Endothelial cell of umbilical vein (primary cell): ENCODE measurements at regions of chr1 and their contacts with region 1.

Region 1: DNA sequence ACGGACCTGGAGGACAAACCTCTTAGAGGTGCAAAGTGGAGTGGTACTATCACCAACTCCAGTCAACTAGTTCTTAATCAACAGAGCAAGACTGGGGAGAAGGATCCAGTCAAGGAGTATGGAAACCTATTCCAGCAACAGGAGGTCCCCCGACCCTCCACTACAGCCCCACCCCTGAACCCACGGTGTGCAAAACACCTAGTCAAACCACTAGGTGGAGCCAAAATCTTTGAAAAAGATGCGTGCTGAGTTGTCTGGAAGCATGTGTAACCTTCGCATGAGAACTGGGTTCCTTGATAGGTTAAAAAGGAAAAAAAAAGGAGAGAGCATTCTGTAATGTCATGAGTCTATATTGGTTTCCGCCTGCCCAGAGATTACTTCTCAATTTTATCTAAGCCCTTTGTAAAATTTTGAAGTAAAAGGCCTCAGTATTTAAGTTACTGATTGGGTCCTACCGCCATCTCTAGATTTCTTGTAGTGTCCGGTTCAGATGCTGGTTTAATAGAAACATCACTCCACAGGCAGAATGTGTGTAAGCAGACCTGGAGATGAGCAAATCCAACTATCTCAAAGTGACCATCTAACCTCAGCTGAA is 81.9 kb upstream of the HAO2 start:
- DNase-seq: peak; percentile 28
- H3K4me3 ChIP-seq: no peak overlapping the region
- H3K27ac ChIP-seq: no peak overlapping the region
- H3K4me1 ChIP-seq: no peaks in the 10 kb centered on the region
- H3K27me3 ChIP-seq: peaks cover 4 to 11% of the 10 kb centered on the region in 2 experiments
- CTCF ChIP-seq: peak; percentile 49 to 65
- POLR2A ChIP-seq: no peak

Region 2: GRCh38 chr1:119027759-119028158 is 258.9 kb before region 1 on chr1:
- CTCF ChIA-PET with region 1: no interaction called
- POLR2A ChIA-PET with region 1: no interaction called
- dilution Hi-C with region 1: no loop called
- intact Hi-C with region 1: no loop called
- DNase-seq: no peak
- H3K4me3 ChIP-seq: no peak overlapping the region
- H3K27ac ChIP-seq: no peak overlapping the region
- H3K4me1 ChIP-seq: no peaks in the 10 kb centered on the region
- H3K27me3 ChIP-seq: no peaks in the 10 kb centered on the region
- CTCF ChIP-seq: no peak
- POLR2A ChIP-seq: no peak

Region 3: DNA sequence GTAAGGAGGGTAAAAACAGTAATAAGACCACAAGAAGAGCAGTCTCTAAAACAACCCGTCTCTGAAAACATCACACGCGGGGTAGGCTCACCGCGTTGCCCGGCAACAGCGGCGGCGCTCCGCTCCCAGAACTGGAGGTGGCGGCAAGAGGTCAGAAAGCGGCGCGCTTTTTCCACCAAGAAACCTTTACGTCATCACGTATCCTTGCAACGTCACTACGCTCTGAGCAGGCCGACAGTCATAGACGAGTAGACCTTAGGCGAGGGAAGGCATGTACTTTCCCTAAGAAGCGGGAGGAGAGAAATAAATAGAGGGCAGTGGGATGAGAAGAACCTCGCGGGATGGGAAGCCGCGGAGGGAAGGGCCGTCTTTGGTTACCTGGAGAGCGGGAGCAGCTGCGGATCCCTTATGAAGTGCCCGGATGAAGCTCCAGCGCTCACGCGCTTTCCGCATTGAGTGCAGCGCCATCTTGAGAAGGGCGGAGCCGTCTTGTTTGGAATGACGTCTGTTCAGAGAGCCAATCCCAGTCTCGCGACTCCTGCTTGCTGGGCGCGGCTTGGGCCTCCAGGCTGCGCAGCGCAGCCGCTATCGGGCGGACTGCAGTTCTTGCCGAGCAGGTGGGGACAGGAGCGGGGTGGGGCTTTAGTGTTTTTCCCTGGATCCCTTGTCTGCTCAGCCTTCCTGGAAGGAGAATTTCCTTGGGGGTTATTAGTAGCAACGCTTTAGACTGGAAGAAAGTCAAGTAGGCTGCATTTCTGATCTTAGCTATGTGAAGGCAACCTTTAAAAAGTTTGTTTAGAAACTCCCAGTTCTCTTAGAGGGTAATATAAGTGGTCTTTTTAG is 146.3 kb before region 1 on chr1 and contains the start of gene WARS2:
- CTCF ChIA-PET with region 1: no interaction called
- POLR2A ChIA-PET with region 1: no interaction called
- dilution Hi-C with region 1: no loop called
- intact Hi-C with region 1: no loop called
- DNase-seq: peak; percentile 97
- H3K4me3 ChIP-seq: peak within 1 kb of the TSS; percentile 14 to 71 (median 56)
- H3K27ac ChIP-seq: peak within 1 kb of the TSS; percentile 89
- H3K4me1 ChIP-seq: peaks cover 13% of the 10 kb centered on the region
- H3K27me3 ChIP-seq: no peaks in the 10 kb centered on the region
- CTCF ChIP-seq: no peak
- POLR2A ChIP-seq: peak; percentile 92
- total RNA-seq, gene WARS2: 11.8 and 13.1 TPM in 2 replicates

Region 4: GRCh38 chr1:119327436-119328155 is 40.9 kb after region 1 on chr1:
- CTCF ChIA-PET with region 1: interaction called, 4 read pairs
- POLR2A ChIA-PET with region 1: no interaction called
- dilution Hi-C with region 1: no loop called
- intact Hi-C with region 1: loop called (anchors 2 kb)
- DNase-seq: peak; percentile 50
- H3K4me3 ChIP-seq: peak overlapping the region; percentile 24 to 33 (median 31)
- H3K27ac ChIP-seq: no peak overlapping the region
- H3K4me1 ChIP-seq: peaks cover 2% of the 10 kb centered on the region
- H3K27me3 ChIP-seq: peaks cover 2 to 3% of the 10 kb centered on the region in 2 experiments
- CTCF ChIP-seq: peak; percentile 61 to 78
- POLR2A ChIP-seq: no peak